ENCODE measurements at regions of chr18 and their contacts with region 1.

Region 1: GRCh38 chr18:32301976-32302743 is 112.3 kb downstream of the MEP1B start:
- DNase-seq: no peak
- ATAC-seq: peak in 7 of 8 donors; percentile 60 to 78 (median 76)
- H3K4me3 ChIP-seq: no peak overlapping the region
- H3K27ac ChIP-seq: peak overlapping the region in 6 of 10 donors; percentile 2 to 79 (median 34)
- H3K4me1 ChIP-seq: peaks cover 0 to 34% (median 14%) of the 10 kb centered on the region in 9 donors
- H3K27me3 ChIP-seq: no peaks in the 10 kb centered on the region
- CTCF ChIP-seq: no peak

Region 2: DNA sequence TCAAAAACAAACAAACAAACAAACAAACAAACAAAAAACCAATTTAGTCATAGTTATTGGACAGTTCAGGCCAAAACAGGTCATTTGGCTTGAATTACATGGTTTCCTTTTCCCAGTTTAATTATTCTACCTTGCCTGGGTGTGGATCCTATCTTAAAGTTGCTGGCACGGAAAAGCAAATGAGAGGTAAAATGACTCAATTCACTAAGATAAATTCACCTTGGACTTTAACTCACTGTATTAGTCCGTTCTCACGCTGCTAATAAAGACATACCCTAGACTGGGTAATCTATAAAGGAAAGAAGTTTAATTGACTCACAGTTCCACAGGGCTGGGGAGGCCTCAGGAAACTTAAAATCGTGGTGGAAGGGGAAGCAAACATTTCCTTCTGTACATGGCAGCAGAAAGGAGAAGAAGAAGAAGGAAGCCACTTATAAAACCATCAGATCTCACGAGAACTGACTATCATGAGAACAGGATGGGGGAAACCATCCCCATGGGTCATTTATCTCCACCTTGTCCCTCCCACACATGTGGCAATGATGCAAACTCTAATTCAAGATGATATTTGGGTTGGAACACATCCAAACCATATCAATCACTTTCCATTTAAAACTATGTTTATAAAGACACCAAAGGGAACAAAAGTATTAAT is 336.7 kb before region 1 on chr18:
- intact Hi-C with region 1: no loop called
- DNase-seq: no peak
- ATAC-seq: no peak
- H3K4me3 ChIP-seq: no peak overlapping the region
- H3K27ac ChIP-seq: no peak overlapping the region
- H3K4me1 ChIP-seq: no peaks in the 10 kb centered on the region
- H3K27me3 ChIP-seq: no peaks in the 10 kb centered on the region
- CTCF ChIP-seq: no peak

Region 3: GRCh38 chr18:32056613-32057358 is 245.4 kb before region 1 on chr18:
- intact Hi-C with region 1: no loop called
- DNase-seq: no peak
- ATAC-seq: no peak
- H3K4me3 ChIP-seq: no peak overlapping the region
- H3K27ac ChIP-seq: no peak overlapping the region
- H3K4me1 ChIP-seq: peaks cover 0 to 8% (median 0%) of the 10 kb centered on the region in 9 donors
- H3K27me3 ChIP-seq: no peaks in the 10 kb centered on the region
- CTCF ChIP-seq: no peak

Region 4: DNA sequence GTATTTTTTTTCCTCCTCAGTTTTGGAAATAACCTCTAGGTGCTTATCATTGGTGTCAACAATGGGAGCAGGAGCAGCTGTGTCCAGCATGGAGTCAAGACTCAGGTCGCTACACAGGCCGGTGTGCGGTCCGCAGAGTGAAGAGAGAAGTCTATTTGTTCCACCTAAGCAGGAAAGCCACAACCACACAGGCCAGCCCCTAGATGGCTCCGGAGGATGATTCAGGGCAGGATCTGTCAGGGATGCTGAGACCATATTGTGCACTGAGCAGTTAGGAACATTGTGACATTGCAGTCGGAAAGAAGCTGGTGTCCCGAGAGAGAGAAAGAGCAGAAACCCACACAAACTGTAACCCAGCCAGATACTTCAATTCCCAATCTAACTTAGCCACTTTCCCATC is 31.6 kb after region 1 on chr18:
- intact Hi-C with region 1: loop called in 1 of 10 experiments (anchors 5 kb)
- DNase-seq: no peak
- ATAC-seq: peak in 7 of 8 donors; percentile 55 to 80 (median 77)
- H3K4me3 ChIP-seq: no peak overlapping the region
- H3K27ac ChIP-seq: no peak overlapping the region
- H3K4me1 ChIP-seq: peaks cover 0 to 49% (median 20%) of the 10 kb centered on the region in 9 donors
- H3K27me3 ChIP-seq: no peaks in the 10 kb centered on the region
- CTCF ChIP-seq: peak in 4 of 9 donors; percentile 16 to 40 (median 28)

Region 5: DNA sequence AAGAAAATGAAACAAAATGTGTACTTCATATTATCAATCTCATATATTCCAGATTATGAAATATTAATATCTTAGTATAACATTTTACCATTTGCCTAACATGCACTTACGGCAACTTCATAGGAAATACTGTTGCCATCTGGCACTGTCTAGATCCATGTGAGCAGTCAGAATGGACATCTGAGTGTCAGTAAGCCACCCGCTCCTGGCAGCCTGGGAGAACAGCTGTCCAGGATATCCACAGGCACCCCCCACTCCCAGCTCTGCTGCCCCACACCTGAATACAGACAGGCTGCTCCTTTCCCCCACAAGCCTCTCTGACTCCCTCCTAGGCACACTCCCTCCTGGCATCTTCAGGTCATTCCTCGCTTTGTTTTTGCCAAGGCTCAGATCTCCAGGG is 41.5 kb after region 1 on chr18:
- intact Hi-C with region 1: loop called in 2 of 10 experiments (anchors 5 kb)
- DNase-seq: no peak
- ATAC-seq: peak in 5 of 8 donors; percentile 48 to 81 (median 65)
- H3K4me3 ChIP-seq: no peak overlapping the region
- H3K27ac ChIP-seq: no peak overlapping the region
- H3K4me1 ChIP-seq: peaks cover 0 to 37% (median 20%) of the 10 kb centered on the region in 9 donors
- H3K27me3 ChIP-seq: no peaks in the 10 kb centered on the region
- CTCF ChIP-seq: no peak

Region 6: DNA sequence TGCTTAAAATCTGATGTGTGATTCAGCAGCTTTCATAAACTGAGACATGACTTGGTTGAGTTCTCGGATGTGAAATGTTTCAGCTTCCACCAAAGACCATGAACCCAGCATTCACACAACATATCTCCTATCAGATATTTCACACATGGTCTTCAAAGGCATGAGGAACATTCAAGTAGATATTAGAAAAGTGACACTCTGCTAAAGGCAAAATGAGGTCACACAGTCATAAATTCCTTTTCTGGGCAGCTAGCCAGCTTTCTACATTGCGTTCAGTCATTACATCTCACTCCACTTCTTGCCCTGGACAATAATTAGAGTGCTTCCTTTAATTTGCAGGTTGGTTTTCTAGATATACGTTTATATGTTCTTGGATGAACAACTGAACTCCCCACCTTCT is 71.8 kb after region 1 on chr18:
- intact Hi-C with region 1: loop called in 1 of 10 experiments (anchors 10 kb)
- DNase-seq: peak in 1 of 2 donors; percentile 48
- ATAC-seq: peak in 6 of 8 donors; percentile 17 to 72 (median 50)
- H3K4me3 ChIP-seq: no peak overlapping the region
- H3K27ac ChIP-seq: peak overlapping the region in 3 of 10 donors; percentile 6 to 53 (median 52)
- H3K4me1 ChIP-seq: peaks cover 0 to 50% (median 21%) of the 10 kb centered on the region in 9 donors
- H3K27me3 ChIP-seq: no peaks in the 10 kb centered on the region
- CTCF ChIP-seq: no peak

Region 7: DNA sequence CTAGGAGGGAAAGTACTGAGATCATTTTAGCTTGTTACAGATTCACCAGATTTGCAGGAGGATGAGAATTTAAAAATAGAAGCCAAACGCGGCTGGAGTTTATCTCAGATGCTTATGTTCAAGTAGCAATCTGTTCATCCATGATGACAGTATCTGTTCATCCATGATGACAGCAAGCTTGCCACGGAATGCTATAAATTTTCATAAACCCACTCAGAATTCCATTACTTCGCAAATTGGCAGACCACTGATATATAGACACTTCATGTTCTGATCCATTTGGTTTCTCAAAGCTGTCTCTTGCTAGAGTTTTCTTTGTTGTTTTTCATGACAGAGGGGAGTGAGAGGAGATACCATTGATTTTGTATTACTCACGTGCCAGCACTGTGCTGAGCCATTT is 84.3 kb after region 1 on chr18:
- intact Hi-C with region 1: no loop called
- DNase-seq: no peak
- ATAC-seq: no peak
- H3K4me3 ChIP-seq: no peak overlapping the region
- H3K27ac ChIP-seq: no peak overlapping the region
- H3K4me1 ChIP-seq: peaks cover 0 to 38% (median 29%) of the 10 kb centered on the region in 9 donors
- H3K27me3 ChIP-seq: no peaks in the 10 kb centered on the region
- CTCF ChIP-seq: no peak

Measured in heart right ventricle (tissue), 16 donors.